Right ventricle myocardium inferior (tissue), 1 donor: ENCODE measurements at regions of chr15 and their contacts with region 1.

Region 1: DNA sequence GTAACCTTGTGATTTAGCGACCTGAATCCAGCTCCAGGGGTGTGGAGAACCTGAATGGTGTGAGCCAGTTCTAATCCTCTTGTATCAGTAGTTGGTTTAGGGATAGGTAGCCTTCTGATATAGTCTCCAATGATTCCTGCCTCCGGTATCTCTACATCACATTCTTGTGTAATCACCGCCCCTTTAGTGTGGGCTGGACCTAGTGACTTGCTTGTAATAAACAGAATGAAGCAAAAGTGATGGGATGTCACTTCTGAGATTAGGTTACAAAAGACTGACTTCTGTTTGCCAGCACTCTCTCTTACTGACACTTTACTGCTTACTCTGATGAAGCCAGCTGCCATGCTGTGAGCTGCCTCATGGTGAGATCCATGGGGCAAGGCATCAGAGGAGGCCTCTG is 36.7 kb downstream of the TM6SF1 start:
- DNase-seq: no peak
- ATAC-seq: no peak

Region 2: DNA sequence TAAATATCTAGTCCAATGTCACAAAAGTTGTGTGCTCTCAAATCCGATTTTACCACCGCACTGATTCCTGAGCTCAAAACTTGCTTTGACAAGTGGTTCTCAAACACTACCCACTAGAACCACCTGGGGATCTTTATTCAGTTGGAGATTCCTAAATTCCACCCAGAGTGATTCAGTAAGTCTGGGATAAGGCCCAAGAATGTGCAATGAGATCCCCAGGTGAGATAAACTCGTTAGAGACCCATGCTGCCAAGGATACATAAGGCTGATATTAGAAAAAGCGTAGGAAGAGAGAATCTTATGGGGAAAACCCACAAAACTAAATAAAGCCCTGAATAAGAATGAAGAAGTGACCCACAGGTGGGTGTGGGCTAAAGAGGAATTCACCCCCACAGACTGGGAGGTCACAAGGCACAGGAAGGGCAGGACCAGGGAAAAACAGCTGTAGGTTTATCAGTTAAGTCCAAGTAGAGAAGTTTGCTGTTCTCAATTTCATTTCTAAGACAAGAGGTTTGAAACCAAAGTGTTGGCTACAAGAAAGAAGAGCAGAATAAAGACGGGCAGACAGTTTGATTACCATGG is 592.4 kb before region 1 on chr15:
- intact Hi-C with region 1: loop called (anchors 10 kb)
- DNase-seq: no peak
- ATAC-seq: no peak

Region 3: DNA sequence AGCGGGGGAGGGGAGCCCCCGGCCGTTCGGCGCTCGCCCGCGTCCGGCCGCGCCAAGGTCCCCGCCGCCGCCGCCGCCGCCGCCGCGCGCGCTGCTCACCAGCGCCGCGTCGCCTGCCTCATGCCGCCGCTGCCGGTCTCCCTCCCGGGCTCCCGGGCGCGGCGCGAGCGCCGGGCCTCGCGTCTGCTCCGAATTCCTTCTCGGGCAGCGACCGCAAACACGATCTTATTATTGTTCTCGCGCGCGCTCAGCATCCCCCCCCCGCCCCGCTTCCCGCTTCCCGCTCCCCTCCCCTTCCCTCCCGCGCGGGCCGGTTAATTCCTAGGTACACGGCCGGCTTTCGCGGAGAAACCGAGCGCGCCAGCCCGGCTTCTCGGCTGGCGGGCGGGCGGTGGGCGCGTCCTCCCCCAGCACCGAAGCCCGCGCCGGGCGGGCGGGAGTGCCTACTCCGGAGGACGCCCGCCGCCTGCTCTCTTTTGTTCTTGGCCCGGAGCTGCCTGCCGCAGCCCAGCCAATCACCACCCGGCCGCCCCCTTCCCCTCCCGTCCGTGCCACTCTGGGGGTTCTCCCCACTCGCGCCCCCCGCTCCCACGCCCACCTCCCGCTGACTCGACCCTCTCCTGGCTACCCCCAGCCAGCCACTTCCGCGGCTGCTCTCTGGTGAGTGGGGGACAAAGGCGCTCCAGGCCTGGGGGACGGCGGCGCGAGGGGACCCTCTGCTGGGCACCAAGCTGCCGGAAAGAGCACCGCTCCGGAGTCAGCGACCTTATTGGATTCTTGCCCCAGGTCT is 63.6 kb after region 1 on chr15 and contains the start of gene HDGFL3:
- intact Hi-C with region 1: no loop called
- DNase-seq: peak; percentile 85
- ATAC-seq: peak; percentile 50
- total RNA-seq, gene HDGFL3: 32.8 TPM